Mammary epithelial cell (primary cell): ENCODE measurements at regions of chr6 and their contacts with region 1.

Region 1: GRCh38 chr6:42482174-42482573 is 30.4 kb upstream of the TRERF1 start:
- DNase-seq: no peak
- H3K4me3 ChIP-seq: no peak overlapping the region
- H3K27ac ChIP-seq: no peak overlapping the region
- H3K4me1 ChIP-seq: no peaks in the 10 kb centered on the region
- H3K27me3 ChIP-seq: no peaks in the 10 kb centered on the region
- CTCF ChIP-seq: no peak

Region 2: GRCh38 chr6:41920921-41921711 is 561.1 kb before region 1 on chr6 and contains the starts of genes BYSL and MED20:
- CTCF ChIA-PET with region 1: no interaction called
- dilution Hi-C with region 1: no loop called
- in situ Hi-C with region 1: no loop called
- intact Hi-C with region 1: no loop called
- DNase-seq: peak; percentile 98
- H3K4me3 ChIP-seq: peak within 1 kb of the TSS; percentile 75 to 92 (median 87)
- H3K27ac ChIP-seq: peak within 1 kb of the TSS; percentile 100
- H3K4me1 ChIP-seq: peaks cover 34% of the 10 kb centered on the region
- H3K27me3 ChIP-seq: no peaks in the 10 kb centered on the region
- CTCF ChIP-seq: peak; percentile 87 to 96
- total RNA-seq, gene BYSL: 14.2 to 52.5 TPM
- total RNA-seq, gene MED20: 22.4 to 23.7 TPM

Region 3: DNA sequence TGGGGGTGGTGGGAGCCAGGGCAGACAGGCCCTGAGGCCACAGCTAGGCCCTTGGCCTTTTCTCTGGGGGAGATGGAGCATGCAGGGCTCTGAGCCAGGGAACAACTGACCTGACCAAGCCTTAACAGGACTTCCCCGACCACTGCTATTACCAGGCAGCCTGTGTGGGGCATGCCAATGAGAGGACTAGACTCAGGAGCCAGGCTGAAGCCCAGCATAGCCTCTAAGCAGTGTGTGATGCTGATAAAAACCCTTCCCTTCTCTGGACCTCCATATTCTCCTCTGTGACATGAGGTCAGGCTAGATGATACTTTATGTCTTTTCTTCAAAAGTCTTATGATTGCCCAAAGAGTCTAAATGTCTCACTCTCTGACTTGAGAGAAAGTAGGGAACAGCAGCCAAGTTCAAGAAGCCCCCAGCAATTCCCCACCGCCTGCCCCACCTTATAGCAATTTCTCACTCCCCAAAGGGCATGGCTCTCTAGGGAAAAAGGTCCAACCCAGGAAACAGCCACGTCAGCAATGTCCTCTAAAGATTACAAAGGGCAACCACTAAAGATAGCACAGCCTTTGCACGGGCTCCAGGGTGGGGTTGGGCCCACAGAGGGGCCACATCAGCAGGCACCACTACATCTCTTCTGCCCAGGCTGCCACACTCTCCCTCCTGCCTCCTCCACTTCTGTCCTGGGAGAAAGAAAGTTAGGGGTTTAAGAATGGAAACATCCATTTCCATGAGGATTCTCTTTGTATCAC is 101.8 kb before region 1 on chr6:
- CTCF ChIA-PET with region 1: no interaction called
- dilution Hi-C with region 1: loop called (anchors 5 kb)
- in situ Hi-C with region 1: no loop called
- intact Hi-C with region 1: no loop called
- DNase-seq: no peak
- H3K4me3 ChIP-seq: no peak overlapping the region
- H3K27ac ChIP-seq: no peak overlapping the region
- H3K4me1 ChIP-seq: no peaks in the 10 kb centered on the region
- H3K27me3 ChIP-seq: no peaks in the 10 kb centered on the region
- CTCF ChIP-seq: no peak

Region 4: GRCh38 chr6:42429850-42430214 is 52.3 kb before region 1 on chr6:
- CTCF ChIA-PET with region 1: no interaction called
- dilution Hi-C with region 1: loop called (anchors 5 kb)
- in situ Hi-C with region 1: no loop called
- intact Hi-C with region 1: no loop called
- DNase-seq: no peak
- H3K4me3 ChIP-seq: no peak overlapping the region
- H3K27ac ChIP-seq: no peak overlapping the region
- H3K4me1 ChIP-seq: peaks cover 4% of the 10 kb centered on the region
- H3K27me3 ChIP-seq: no peaks in the 10 kb centered on the region
- CTCF ChIP-seq: no peak

Region 5: DNA sequence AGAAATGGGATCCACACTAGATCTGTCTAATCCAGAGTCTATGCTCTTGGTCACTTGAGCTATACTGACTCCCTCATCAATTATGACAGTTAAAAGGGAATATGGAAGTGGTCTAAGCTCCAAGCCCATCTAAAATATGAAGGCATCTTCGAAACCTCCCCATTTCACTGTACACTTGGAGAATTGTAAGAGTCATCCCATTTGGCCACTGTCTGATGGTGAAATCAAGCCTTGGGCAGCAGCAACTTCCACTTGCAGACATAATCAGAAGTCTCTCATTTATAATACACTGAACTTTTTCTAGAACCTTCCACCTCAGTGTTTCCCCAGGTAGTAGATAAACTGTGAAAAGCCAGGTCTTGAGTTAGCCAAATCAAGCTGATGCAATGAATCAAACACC is 55.4 kb after region 1 on chr6:
- CTCF ChIA-PET with region 1: no interaction called
- dilution Hi-C with region 1: loop called (anchors 5 kb)
- in situ Hi-C with region 1: no loop called
- intact Hi-C with region 1: no loop called
- DNase-seq: no peak
- H3K4me3 ChIP-seq: no peak overlapping the region
- H3K27ac ChIP-seq: no peak overlapping the region
- H3K4me1 ChIP-seq: no peaks in the 10 kb centered on the region
- H3K27me3 ChIP-seq: no peaks in the 10 kb centered on the region
- CTCF ChIP-seq: no peak

Region 6: DNA sequence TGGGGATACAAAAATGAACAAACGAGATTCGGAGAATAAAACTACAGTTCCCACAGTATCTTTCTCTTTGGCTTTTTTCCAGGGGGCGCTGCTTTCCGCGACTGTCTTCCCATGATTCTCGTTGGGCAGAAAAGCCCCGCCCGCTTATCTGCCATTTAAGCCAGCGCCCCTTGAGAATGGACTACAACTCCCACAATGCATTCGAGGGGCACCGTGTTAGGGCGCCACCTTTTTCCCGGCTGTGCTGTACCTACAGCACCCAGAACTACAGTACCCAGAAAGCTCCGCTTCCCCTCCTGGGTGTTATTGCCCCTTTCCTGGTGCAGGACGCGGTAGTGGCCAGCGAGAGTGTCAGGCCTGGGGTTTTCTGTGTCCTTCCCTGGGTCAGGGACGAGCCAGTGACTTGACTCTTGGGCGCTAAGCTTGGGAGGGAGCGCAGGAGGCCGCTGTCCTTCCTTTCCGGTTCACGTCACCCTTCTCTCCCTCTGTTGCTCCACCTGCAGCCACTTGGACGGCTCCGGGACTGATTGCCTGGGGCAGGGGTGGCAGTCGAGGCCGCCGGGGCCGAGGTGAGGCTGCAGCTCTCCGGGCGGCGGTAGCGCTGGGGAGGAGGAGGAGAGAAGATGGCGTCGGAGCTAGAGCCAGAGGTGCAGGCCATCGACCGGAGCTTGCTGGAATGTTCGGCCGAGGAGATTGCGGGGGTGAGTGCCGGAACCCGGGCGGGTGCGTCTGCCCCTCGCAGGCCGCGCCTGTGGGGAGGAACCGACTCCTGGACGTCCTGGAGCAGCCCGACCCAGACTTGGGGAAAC is 81.7 kb after region 1 on chr6 and contains the start of gene UBR2:
- CTCF ChIA-PET with region 1: no interaction called
- dilution Hi-C with region 1: no loop called
- in situ Hi-C with region 1: no loop called
- intact Hi-C with region 1: no loop called
- DNase-seq: peak; percentile 98
- H3K4me3 ChIP-seq: peak within 1 kb of the TSS; percentile 78 to 84 (median 83)
- H3K27ac ChIP-seq: peak within 1 kb of the TSS; percentile 79
- H3K4me1 ChIP-seq: peaks cover 4% of the 10 kb centered on the region
- H3K27me3 ChIP-seq: no peaks in the 10 kb centered on the region
- CTCF ChIP-seq: peak in 1 of 2 donors; percentile 39
- total RNA-seq, gene UBR2: 23.8 to 31.3 TPM